ENCODE measurements at regions of chr10 and their contacts with region 1.

Region 1: DNA sequence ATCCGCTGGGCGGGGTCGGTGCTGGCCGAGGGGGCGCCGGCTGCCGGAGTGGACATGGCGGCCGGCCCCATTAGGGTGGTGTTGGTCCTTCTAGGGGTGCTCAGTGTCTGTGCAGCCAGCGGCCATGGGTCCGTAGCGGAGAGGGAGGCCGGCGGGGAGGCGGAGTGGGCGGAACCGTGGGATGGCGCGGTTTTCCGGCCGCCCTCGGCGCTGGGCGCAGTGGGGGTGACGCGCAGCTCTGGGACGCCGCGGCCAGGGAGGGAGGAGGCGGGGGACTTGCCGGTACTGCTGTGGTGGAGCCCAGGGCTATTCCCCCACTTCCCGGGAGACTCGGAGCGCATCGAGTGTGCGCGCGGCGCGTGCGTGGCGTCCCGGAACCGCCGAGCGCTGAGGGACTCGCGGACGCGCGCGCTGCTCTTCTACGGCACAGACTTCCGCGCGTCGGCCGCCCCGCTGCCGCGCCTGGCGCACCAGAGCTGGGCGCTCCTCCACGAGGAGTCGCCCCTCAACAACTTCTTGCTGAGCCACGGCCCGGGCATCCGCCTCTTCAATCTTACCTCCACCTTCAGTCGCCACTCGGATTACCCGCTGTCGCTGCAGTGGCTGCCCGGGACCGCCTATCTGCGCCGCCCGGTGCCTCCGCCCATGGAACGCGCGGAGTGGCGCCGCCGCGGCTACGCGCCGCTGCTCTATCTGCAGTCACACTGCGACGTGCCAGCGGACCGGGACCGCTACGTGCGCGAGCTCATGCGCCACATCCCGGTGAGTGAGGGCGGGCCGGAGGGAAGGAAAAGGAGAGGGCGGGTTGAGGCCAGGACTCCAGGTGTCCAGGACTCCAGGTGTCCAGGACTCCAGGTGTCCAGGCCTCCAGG is 9.3 kb upstream of the CHCHD1 start:
- DNase-seq: peak; percentile 82 to 88 (median 86)
- H3K4me3 ChIP-seq: peak overlapping the region; percentile 92 to 95
- H3K4me3 Mint-ChIP-seq: peak overlapping the region; percentile 93 to 99 (median 96)
- H3K27ac ChIP-seq: peak overlapping the region; percentile 86
- H3K27ac Mint-ChIP-seq: peak overlapping the region; percentile 84 to 98 (median 96)
- H3K4me1 ChIP-seq: peaks cover 62% of the 10 kb centered on the region
- H3K4me1 Mint-ChIP-seq: peaks cover 36 to 83% (median 50%) of the 10 kb centered on the region in 4 donors
- H3K27me3 ChIP-seq: no peaks in the 10 kb centered on the region
- H3K27me3 Mint-ChIP-seq: no peaks in the 10 kb centered on the region

Region 2: GRCh38 chr10:73730153-73730906 is 42.2 kb before region 1 on chr10:
- CTCF ChIA-PET with region 1: interaction called, 3 read pairs
- POLR2A ChIA-PET with region 1: interaction called, 37 read pairs
- intact Hi-C with region 1: loop called (anchors 2 kb)
- DNase-seq: peak; percentile 87 to 92 (median 90)
- H3K4me3 ChIP-seq: peak overlapping the region; percentile 78 to 81
- H3K4me3 Mint-ChIP-seq: peak overlapping the region; percentile 98 to 100 (median 100)
- H3K27ac ChIP-seq: peak overlapping the region; percentile 78
- H3K27ac Mint-ChIP-seq: peak overlapping the region; percentile 97 to 100 (median 98)
- H3K4me1 ChIP-seq: peaks cover 15% of the 10 kb centered on the region
- H3K4me1 Mint-ChIP-seq: peaks cover 12 to 39% (median 21%) of the 10 kb centered on the region in 4 donors
- H3K27me3 ChIP-seq: no peaks in the 10 kb centered on the region
- H3K27me3 Mint-ChIP-seq: no peaks in the 10 kb centered on the region

Region 3: DNA sequence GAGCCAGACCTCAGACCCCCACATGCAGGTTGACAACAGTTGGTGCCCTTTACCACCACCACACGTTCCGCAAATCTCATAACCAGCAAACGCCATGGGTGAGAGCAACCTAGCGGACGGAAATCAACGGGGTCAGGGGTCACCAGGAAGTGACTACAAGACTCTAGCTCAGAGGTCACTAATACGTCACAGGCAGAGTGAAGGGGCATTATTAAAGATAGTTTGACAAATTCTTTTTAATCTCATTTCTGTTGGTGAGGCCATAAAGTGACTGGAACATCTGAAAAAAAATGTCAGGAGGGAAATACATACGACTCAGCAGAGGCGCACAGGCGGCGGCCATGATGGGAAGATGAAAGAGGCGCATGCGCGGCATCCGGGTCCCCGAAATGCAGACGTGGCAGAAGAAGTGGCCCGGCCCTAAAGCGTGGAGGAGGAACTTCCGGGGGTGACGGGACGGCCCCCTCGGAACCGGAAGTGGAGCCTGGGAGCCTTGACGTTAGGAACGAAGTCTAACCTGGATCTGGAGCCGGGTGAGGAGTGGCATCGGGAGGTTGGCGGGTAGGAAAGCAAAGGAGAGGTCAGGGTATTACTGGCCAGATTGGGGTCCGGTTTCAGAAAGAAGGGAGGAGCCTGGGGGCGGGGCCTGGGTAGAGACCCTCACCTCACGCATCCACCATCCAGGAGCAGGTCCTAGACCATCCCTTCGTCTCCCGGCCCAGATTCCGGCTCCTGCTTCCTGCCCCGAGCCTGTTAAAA is 28.4 kb before region 1 on chr10 and contains the start of gene SEC24C:
- CTCF ChIA-PET with region 1: interaction called, 23 read pairs
- POLR2A ChIA-PET with region 1: interaction called, 63 read pairs
- intact Hi-C with region 1: loop called (anchors 1 kb)
- DNase-seq: peak; percentile 95 to 96 (median 96)
- H3K4me3 ChIP-seq: peak within 1 kb of the TSS; percentile 95
- H3K4me3 Mint-ChIP-seq: peak within 1 kb of the TSS; percentile 99 to 100 (median 100)
- H3K27ac ChIP-seq: peak within 1 kb of the TSS; percentile 97
- H3K27ac Mint-ChIP-seq: peak within 1 kb of the TSS; percentile 99 to 100 (median 100)
- H3K4me1 ChIP-seq: peaks cover 38% of the 10 kb centered on the region
- H3K4me1 Mint-ChIP-seq: peaks cover 20 to 47% (median 33%) of the 10 kb centered on the region in 4 donors
- H3K27me3 ChIP-seq: no peaks in the 10 kb centered on the region
- H3K27me3 Mint-ChIP-seq: no peaks in the 10 kb centered on the region
- total RNA-seq, gene SEC24C: 126 to 127 TPM

Region 4: GRCh38 chr10:73759512-73760115 is 12.9 kb before region 1 on chr10:
- CTCF ChIA-PET with region 1: interaction called, 101 read pairs
- POLR2A ChIA-PET with region 1: interaction called, 73 read pairs
- intact Hi-C with region 1: loop called (anchors 1 kb)
- DNase-seq: peak; percentile 70 to 92 (median 73)
- H3K4me3 ChIP-seq: peak overlapping the region in 1 of 2 donors; percentile 42
- H3K4me3 Mint-ChIP-seq: peak overlapping the region; percentile 26 to 79 (median 61)
- H3K27ac ChIP-seq: peak overlapping the region; percentile 48
- H3K27ac Mint-ChIP-seq: peak overlapping the region; percentile 76 to 93 (median 90)
- H3K4me1 ChIP-seq: peaks cover 62% of the 10 kb centered on the region
- H3K4me1 Mint-ChIP-seq: peaks cover 29 to 64% (median 50%) of the 10 kb centered on the region in 4 donors
- H3K27me3 ChIP-seq: no peaks in the 10 kb centered on the region
- H3K27me3 Mint-ChIP-seq: no peaks in the 10 kb centered on the region

Region 5: DNA sequence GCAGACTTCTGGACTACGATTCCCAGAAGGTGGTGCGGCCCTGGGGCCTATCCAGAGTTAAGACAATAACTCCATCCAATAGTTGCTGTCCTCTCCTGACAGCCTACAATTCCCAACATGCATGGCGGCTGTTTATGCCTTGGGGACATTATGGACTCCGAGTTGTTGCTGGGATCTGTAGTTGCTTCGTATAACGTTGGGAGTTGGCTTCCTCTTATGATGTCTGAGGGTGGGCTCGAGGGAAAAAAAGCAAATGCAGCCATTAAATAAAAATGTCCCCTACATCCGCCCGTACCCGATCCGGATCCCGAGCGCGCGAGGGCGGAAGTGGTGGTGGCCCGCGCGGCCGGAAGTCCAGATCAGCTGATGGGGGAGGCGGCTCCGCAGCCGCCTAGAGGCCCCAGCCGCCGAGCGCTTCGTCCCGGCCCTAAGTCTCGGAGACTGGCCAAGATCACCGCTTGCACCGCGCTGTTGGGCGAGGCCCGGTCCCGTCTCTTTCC is 12.8 kb after region 1 on chr10 and contains the start of gene ZSWIM8:
- CTCF ChIA-PET with region 1: interaction called, 101 read pairs
- POLR2A ChIA-PET with region 1: interaction called, 286 read pairs
- intact Hi-C with region 1: loop called (anchors 1 kb)
- DNase-seq: peak; percentile 85 to 96 (median 89)
- H3K4me3 ChIP-seq: peak within 1 kb of the TSS; percentile 62 to 64
- H3K4me3 Mint-ChIP-seq: peak within 1 kb of the TSS; percentile 94 to 99 (median 98)
- H3K27ac ChIP-seq: peak within 1 kb of the TSS; percentile 77
- H3K27ac Mint-ChIP-seq: peak within 1 kb of the TSS; percentile 95 to 99 (median 99)
- H3K4me1 ChIP-seq: peaks cover 54% of the 10 kb centered on the region
- H3K4me1 Mint-ChIP-seq: peaks cover 35 to 67% (median 50%) of the 10 kb centered on the region in 4 donors
- H3K27me3 ChIP-seq: no peaks in the 10 kb centered on the region
- H3K27me3 Mint-ChIP-seq: peaks cover 2% of the 10 kb centered on the region in 2 donors
- total RNA-seq, gene ZSWIM8: 93.3 to 100 TPM

Region 6: DNA sequence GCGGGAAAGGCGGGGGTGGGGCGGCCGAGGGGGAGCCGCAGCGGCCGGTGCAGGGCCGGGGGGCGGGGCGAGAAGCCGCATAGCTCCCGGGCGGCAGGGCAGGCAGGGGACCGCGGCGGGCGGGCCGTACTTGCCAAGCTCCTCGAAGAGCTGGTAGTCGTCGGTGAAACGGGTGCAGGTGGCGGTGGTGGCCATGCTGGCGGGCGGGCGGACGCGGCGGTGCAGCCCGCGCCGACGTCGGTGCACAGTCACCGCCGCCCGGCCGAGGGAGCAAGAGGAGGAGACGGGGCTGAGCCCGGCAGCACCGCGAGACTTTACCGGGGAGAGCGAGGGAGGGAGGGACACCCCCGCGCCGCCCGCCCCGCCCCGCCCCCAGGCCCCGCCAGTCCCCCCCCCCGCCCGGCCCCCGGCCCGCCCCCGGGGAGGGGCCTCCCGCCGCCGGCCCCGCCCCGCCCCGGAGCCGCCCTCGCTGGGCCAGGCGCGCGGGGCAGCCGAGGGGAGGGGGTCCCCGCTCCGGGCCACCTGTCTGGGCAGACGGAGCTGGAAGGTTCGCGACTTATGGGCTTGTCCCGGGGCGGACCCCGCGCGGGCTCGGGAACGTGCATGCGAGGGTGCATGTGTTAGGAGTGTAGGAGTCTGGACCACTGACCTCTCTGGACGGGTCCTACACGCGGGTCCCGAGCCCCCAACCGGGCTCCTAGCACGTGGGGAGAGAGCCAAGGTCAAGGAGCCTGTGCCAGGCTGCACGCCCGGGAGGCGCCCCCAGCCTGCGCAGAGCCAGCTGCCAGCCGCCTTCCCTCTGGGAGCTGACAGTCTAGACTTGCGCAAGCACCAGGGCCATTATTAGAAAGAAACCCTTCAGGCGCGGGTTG is 102.0 kb after region 1 on chr10 and contains the start of gene CAMK2G:
- CTCF ChIA-PET with region 1: interaction called, 20 read pairs
- POLR2A ChIA-PET with region 1: interaction called, 29 read pairs
- intact Hi-C with region 1: loop called (anchors 1 kb)
- DNase-seq: peak; percentile 83 to 87 (median 86)
- H3K4me3 ChIP-seq: peak within 1 kb of the TSS; percentile 61 to 72
- H3K4me3 Mint-ChIP-seq: peak within 1 kb of the TSS; percentile 86 to 97 (median 94)
- H3K27ac ChIP-seq: peak within 1 kb of the TSS; percentile 78
- H3K27ac Mint-ChIP-seq: peak within 1 kb of the TSS; percentile 87 to 99 (median 96)
- H3K4me1 ChIP-seq: peaks cover 65% of the 10 kb centered on the region
- H3K4me1 Mint-ChIP-seq: peaks cover 43 to 79% (median 58%) of the 10 kb centered on the region in 4 donors
- H3K27me3 ChIP-seq: no peaks in the 10 kb centered on the region
- H3K27me3 Mint-ChIP-seq: no peaks in the 10 kb centered on the region
- total RNA-seq, gene CAMK2G: 64.3 to 70.4 TPM